Astrocyte of the cerebellum (primary cell): ENCODE measurements at regions of chr1 and their contacts with region 1.

Region 1: GRCh38 chr1:31264790-31265386 is 25.2 kb upstream of the NKAIN1 start:
- DNase-seq: no peak
- H3K4me3 ChIP-seq: no peak overlapping the region
- CTCF ChIP-seq: no peak

Region 2: DNA sequence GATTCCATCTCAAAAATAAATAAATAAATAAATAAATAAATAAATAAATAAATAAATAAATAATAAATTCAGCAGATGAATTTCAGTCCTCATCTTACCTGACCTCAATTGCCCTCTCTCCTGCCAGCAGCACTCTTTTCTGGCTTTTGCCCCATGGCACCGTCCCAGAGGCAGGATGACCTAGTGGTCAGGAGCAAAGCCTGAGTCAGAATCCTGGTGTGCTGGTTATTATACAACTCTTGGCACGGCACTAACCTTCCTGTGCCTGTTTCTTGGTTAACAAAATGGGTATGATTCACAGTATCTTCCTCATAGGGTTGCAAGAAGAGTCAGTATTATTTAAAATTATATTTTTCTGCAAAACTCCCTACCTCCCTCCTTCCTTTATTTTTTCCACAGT is 68.2 kb before region 1 on chr1:
- in situ Hi-C with region 1: no loop called
- DNase-seq: no peak
- H3K4me3 ChIP-seq: no peak overlapping the region
- CTCF ChIP-seq: no peak

Region 3: GRCh38 chr1:31214316-31215064 is 50.4 kb before region 1 on chr1:
- in situ Hi-C with region 1: loop called (anchors 5 kb)
- DNase-seq: no peak
- H3K4me3 ChIP-seq: no peak overlapping the region
- CTCF ChIP-seq: no peak

Region 4: GRCh38 chr1:31227891-31228568 is 36.9 kb before region 1 on chr1:
- in situ Hi-C with region 1: no loop called
- DNase-seq: peak; percentile 11
- H3K4me3 ChIP-seq: no peak overlapping the region
- CTCF ChIP-seq: no peak

Region 5: GRCh38 chr1:31564134-31564989 is 299.5 kb after region 1 on chr1:
- in situ Hi-C with region 1: no loop called
- DNase-seq: peak; percentile 33
- H3K4me3 ChIP-seq: no peak overlapping the region
- CTCF ChIP-seq: peak; percentile 85